HepG2 (cell line): ENCODE measurements at regions of chr12 and their contacts with region 1.

Region 1: DNA sequence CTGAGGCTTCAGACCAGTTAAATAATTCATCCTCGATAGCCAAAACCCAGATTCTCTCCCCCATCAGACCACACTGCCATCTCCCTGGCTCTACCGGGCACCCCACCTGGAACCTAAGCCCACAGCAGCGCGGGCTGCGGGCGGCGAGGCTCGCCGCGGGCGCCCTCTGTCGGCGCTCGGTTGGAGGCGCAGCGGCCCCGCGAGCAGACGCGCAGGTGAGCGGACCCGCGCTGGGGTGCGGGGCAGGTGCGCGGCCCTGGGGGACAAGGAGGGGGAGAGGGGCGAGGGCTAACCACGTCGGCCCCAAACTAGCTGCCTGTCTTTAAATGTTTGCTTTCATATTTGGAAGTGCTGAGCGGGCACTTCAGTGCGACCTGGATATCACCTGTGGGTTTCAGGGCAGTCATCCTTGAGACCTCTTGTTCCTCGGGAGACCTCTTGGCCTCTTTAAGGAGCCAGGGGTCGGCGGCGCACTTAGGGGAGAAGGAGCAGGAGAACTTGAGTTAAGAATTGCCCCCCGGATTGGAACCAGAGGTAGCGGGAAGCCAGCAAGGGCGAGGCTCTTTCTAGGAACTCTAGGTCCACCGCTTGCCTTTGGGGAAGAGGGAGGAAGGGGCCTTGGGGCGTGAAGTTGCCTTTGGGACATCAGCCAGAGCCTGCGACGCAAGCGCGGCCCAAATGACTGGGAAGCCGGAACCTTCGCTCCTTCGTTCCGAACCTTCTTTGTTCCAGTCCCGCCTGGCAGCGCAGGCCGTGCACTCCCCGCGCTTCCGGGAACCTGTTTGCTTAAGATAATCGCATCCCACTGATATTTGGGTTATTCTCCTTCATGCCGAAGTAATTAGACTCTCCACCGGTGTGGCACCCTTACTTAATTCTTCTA is 78.7 kb downstream of the NEDD1 start:
- DNase-seq: no peak
- ATAC-seq: peak; percentile 90
- H3K4me3 ChIP-seq: peak overlapping the region in 1 of 3 experiments; percentile 8; a peak in 1 of 6 replicates
- H3K27ac ChIP-seq: no peak overlapping the region
- H3K4me1 ChIP-seq: no peaks in the 10 kb centered on the region
- H3K27me3 ChIP-seq: peaks cover 1 to 10% of the 10 kb centered on the region in 2 experiments; a peak in 2 of 5 replicates
- CTCF ChIP-seq: peak; percentile 63
- EP300 ChIP-seq: no peak
- POLR2A ChIP-seq: no peak
- RAD21 ChIP-seq: 0 out of 2 replicates have a peak, but pooled peaks have one; percentile 18

Region 2: GRCh38 chr12:96578526-96579125 is 407.1 kb before region 1 on chr12:
- CTCF ChIA-PET with region 1: interaction called, 5 read pairs
- POLR2A ChIA-PET with region 1: no interaction called
- in situ Hi-C with region 1: loop called (anchors 25 kb)
- intact Hi-C with region 1: loop called (anchors 1 kb)
- DNase-seq: peak; percentile 48
- ATAC-seq: peak; percentile 71
- H3K4me3 ChIP-seq: no peak overlapping the region
- H3K27ac ChIP-seq: no peak overlapping the region
- H3K4me1 ChIP-seq: no peaks in the 10 kb centered on the region
- H3K27me3 ChIP-seq: no peaks in the 10 kb centered on the region
- CTCF ChIP-seq: peak; percentile 70
- EP300 ChIP-seq: no peak
- POLR2A ChIP-seq: no peak
- RAD21 ChIP-seq: no peak

Region 3: GRCh38 chr12:97022536-97023230 is 37.0 kb after region 1 on chr12:
- CTCF ChIA-PET with region 1: no interaction called
- POLR2A ChIA-PET with region 1: no interaction called
- in situ Hi-C with region 1: no loop called
- intact Hi-C with region 1: no loop called
- DNase-seq: no peak
- ATAC-seq: no peak
- H3K4me3 ChIP-seq: no peak overlapping the region
- H3K27ac ChIP-seq: no peak overlapping the region
- H3K4me1 ChIP-seq: no peaks in the 10 kb centered on the region
- H3K27me3 ChIP-seq: no peaks in the 10 kb centered on the region
- CTCF ChIP-seq: no peak
- EP300 ChIP-seq: no peak
- POLR2A ChIP-seq: no peak
- RAD21 ChIP-seq: no peak

Region 4: GRCh38 chr12:97308576-97309198 is 323.0 kb after region 1 on chr12:
- CTCF ChIA-PET with region 1: interaction called, 3 read pairs
- POLR2A ChIA-PET with region 1: no interaction called
- in situ Hi-C with region 1: loop called (anchors 10 kb)
- intact Hi-C with region 1: loop called (anchors 1 kb)
- DNase-seq: peak; percentile 39
- ATAC-seq: no peak
- H3K4me3 ChIP-seq: no peak overlapping the region
- H3K27ac ChIP-seq: no peak overlapping the region
- H3K4me1 ChIP-seq: no peaks in the 10 kb centered on the region
- H3K27me3 ChIP-seq: no peaks in the 10 kb centered on the region
- CTCF ChIP-seq: peak; percentile 61
- EP300 ChIP-seq: no peak
- POLR2A ChIP-seq: no peak
- RAD21 ChIP-seq: no peak; the same call in 1 of the 2 replicates

Region 5: DNA sequence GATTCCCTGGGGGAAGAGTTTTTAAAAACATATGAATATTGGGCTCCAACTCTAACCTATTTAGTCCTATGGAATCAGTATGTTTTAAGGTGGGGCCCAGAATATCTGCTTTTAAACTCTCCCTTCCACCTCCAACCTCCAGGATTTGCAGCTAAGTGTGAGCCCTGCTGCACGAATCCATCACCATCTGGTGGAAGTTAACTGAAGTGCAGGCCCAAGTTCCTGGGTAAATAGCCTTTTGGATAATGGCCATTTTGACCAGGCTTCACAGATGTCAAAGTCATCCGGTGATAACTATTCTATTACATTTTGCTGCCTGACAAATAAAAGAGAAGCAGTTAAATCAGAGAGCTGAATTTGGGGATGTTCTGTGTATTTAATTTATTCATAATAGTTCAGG is 418.8 kb after region 1 on chr12:
- CTCF ChIA-PET with region 1: no interaction called
- POLR2A ChIA-PET with region 1: no interaction called
- in situ Hi-C with region 1: no loop called
- intact Hi-C with region 1: loop called (anchors 2 kb)
- DNase-seq: peak; percentile 51
- ATAC-seq: peak; percentile 92
- H3K4me3 ChIP-seq: no peak overlapping the region
- H3K27ac ChIP-seq: no peak overlapping the region
- H3K4me1 ChIP-seq: no peaks in the 10 kb centered on the region
- H3K27me3 ChIP-seq: no peaks in the 10 kb centered on the region; a peak in 2 of 5 replicates
- CTCF ChIP-seq: peak; percentile 81
- EP300 ChIP-seq: no peak
- POLR2A ChIP-seq: no peak
- RAD21 ChIP-seq: peak; percentile 73

Region 6: DNA sequence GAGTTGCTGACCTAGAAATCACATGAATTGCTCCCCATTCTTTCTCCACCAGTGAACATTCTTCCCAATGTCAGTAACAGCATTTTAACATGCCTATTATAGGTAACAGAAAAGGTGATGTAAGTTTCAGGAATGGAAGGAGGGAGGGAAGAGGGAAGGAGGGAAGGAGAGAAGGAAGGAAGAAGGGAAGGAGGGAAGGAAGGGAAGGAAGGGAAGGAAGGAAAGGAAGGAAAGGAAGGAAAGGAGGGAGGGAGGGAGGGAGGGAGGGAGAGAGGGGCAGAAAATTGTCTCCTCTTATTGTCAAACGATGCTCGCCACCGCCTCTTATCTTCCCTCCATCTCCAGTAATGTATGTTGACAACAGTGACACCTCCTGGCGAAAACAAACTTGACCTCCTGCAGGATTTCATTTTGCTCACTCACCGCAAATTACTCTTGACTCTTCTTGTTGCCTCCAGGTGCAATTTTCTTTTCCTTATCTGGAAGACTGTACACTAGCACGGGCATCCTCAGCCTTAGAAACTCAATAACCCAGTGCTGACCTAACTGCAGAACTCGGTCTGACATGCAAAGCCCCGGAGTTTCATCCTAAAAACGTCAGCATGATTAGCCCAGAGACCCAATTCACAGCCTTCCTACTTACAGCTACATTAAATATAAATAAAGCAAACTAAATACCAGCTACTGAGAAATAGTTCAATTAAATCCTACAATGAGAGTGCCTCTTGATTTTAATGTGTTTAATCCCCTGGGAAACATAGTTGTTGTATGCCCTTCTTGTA is 1017.2 kb after region 1 on chr12:
- CTCF ChIA-PET with region 1: no interaction called
- POLR2A ChIA-PET with region 1: no interaction called
- in situ Hi-C with region 1: loop called (anchors 25 kb)
- intact Hi-C with region 1: loop called (anchors 5 kb)
- DNase-seq: peak; percentile 36
- ATAC-seq: peak; percentile 64
- H3K4me3 ChIP-seq: no peak overlapping the region
- H3K27ac ChIP-seq: no peak overlapping the region
- H3K4me1 ChIP-seq: no peaks in the 10 kb centered on the region
- H3K27me3 ChIP-seq: no peaks in the 10 kb centered on the region
- CTCF ChIP-seq: peak; percentile 74
- EP300 ChIP-seq: no peak
- POLR2A ChIP-seq: no peak
- RAD21 ChIP-seq: no peak; the same call in 1 of the 2 replicates

Region 7: GRCh38 chr12:98397316-98398105 is 1411.8 kb after region 1 on chr12:
- CTCF ChIA-PET with region 1: interaction called, 4 read pairs
- POLR2A ChIA-PET with region 1: no interaction called
- in situ Hi-C with region 1: loop called (anchors 25 kb)
- intact Hi-C with region 1: loop called (anchors 1 kb)
- DNase-seq: peak; percentile 68
- ATAC-seq: peak; percentile 94
- H3K4me3 ChIP-seq: peak overlapping the region; percentile 50 to 60 (median 54)
- H3K27ac ChIP-seq: no peak overlapping the region
- H3K4me1 ChIP-seq: peaks cover 31% of the 10 kb centered on the region
- H3K27me3 ChIP-seq: no peaks in the 10 kb centered on the region
- CTCF ChIP-seq: peak; percentile 93
- EP300 ChIP-seq: no peak
- POLR2A ChIP-seq: no peak
- RAD21 ChIP-seq: peak; percentile 78